HepG2 (cell line): ENCODE measurements at regions of chr2 and their contacts with region 1.

Region 1: GRCh38 chr2:207833251-207833751 is 63.6 kb upstream of the FZD5 start:
- DNase-seq: peak; percentile 87
- ATAC-seq: peak; percentile 33
- H3K4me3 ChIP-seq: no peak overlapping the region
- H3K27ac ChIP-seq: peak overlapping the region; percentile 16
- H3K4me1 ChIP-seq: peaks cover 80% of the 10 kb centered on the region
- H3K27me3 ChIP-seq: no peaks in the 10 kb centered on the region
- CTCF ChIP-seq: no peak
- EP300 ChIP-seq: no peak; a peak in 1 of 4 replicates
- POLR2A ChIP-seq: no peak
- RAD21 ChIP-seq: no peak

Region 2: DNA sequence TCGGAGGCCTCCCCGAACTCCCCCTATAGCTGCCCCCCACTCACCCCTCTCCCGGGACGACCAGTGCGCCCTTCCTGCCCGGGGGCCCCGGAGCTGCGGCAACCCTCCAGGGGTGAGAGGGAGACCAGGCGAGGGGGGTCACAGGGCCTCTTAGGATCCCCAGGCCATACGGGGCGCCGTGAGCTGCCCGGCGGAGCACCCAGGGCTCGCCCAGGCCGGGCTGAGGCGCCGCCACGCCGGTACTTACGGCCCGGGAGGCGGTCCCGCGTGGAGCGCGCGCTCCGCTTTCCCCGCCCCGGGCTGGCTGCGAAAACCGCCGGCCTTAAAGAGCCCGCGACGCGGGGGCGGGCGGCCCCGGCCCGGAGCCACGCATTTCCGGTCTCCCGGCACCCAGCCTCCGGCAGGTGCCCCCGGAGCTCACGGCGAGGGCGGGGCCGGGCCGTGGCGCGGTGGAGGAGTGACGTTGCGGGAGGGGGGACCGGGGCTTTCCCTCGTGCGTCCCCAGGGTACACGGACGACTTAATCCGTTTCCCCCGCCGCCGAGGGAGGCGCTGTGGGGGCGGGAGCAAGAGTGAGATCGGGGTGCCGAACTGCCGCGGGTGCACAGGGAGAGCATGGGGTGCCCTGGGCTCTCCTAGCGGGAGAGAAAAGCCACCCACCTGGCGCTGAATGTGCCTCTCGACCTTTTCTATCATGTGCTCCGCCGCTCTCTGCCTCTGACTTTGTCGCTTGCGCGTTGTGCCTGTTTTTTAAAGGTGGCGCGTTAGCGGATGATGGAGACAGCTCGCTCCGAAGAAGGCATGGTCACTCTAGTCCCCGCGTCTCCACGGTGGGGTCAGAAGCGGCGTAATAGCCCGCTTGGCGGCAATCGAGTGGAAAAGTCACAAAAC is 208.0 kb before region 1 on chr2 and contains the start of gene METTL21A:
- CTCF ChIA-PET with region 1: no interaction called
- POLR2A ChIA-PET with region 1: no interaction called
- in situ Hi-C with region 1: no loop called
- intact Hi-C with region 1: loop called (anchors 10 kb)
- DNase-seq: peak; percentile 94
- ATAC-seq: peak; percentile 80
- H3K4me3 ChIP-seq: peak within 1 kb of the TSS; percentile 80 to 92 (median 89)
- H3K27ac ChIP-seq: peak within 1 kb of the TSS; percentile 87
- H3K4me1 ChIP-seq: peaks cover 66% of the 10 kb centered on the region
- H3K27me3 ChIP-seq: no peaks in the 10 kb centered on the region; a peak in 1 of 5 replicates
- CTCF ChIP-seq: peak; percentile 92
- EP300 ChIP-seq: peak in 1 of 2 experiments; percentile 68; a peak in 3 of 4 replicates
- POLR2A ChIP-seq: peak; percentile 83 to 88
- RAD21 ChIP-seq: peak; percentile 69
- total RNA-seq, gene METTL21A: 61.2 and 65.1 TPM in 2 replicates

Region 3: DNA sequence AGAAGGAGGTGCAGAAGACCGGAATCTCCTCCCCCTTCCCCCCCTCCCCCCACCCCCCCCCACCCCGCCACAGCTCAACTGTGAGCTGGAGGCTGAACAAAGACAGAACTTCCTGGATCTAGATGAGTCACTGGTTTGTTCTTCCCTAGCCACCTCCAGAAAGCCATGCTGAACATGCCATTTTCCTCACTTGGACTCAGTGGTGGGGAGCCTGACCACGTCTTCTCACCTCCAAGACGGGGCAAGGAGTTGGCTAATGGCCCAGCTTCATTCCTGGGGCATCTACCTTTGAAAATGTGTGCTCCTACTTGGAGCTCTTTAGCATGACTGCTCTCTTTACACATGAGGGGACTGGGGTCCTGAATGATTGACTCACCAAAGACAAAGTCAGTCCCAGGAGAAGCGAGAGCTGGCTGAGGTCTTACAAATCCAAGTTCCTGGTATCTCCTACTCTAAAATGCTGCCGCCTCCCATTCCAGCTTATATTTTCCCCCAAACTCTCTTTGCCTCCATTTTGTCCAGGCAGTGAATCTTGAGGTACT is 41.0 kb before region 1 on chr2:
- CTCF ChIA-PET with region 1: no interaction called
- POLR2A ChIA-PET with region 1: interaction called, 23 read pairs
- in situ Hi-C with region 1: no loop called
- intact Hi-C with region 1: loop called (anchors 2 kb)
- DNase-seq: peak; percentile 84
- ATAC-seq: peak; percentile 66
- H3K4me3 ChIP-seq: peak overlapping the region in 1 of 3 experiments; percentile 49; a peak in 2 of 6 replicates
- H3K27ac ChIP-seq: peak overlapping the region; percentile 82
- H3K4me1 ChIP-seq: peaks cover 73% of the 10 kb centered on the region
- H3K27me3 ChIP-seq: no peaks in the 10 kb centered on the region
- CTCF ChIP-seq: no peak
- EP300 ChIP-seq: peak in 1 of 2 experiments; percentile 16; a peak in 1 of 4 replicates
- POLR2A ChIP-seq: 0 out of 4 replicates have a peak, but pooled peaks have one; percentile 44 to 53
- RAD21 ChIP-seq: no peak

Region 4: DNA sequence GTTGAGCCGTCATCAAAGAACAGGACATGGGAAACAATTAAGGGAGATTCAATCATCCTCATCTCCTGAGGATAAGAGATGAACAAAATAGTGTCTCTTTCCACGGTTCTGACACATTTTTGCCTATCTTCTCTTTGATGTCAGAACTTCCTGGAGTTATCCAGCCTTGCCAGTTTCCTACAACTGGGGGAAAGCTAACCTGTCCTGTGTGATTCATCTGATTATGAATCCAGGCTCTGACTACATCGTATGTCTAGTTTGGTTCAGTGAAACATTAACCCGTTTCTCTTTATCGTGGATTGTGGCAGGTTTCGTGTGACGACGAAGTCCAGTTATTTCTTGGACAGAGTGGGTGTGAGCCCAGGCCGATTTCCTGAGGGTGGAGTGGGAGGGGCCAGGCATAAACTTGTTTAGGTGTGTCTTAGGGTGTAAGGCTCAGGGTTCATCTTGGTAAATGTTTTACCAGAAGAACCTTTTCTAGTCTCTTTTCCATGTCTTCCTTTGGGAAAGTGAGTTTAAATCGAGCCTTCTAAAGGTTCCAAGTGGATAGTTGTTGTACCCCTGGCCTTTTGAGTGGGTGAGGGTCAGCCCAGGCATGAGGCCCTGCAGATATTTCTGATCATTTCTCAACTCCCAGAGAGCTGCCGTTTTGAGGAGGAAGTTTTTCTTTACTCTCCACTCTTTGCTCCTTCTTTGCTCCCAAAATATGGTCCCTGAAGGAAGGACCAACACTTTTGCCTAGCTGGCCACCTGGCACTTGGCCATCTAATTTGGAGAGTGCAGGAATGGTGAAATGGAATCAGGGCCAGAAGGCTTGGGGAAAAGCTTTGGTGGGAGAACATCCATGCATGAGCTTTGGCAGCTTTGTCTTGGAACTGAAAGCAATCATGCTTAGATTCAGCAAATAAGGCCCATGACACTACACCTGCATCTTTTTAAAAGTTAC is 13.2 kb before region 1 on chr2:
- CTCF ChIA-PET with region 1: no interaction called
- POLR2A ChIA-PET with region 1: interaction called, 108 read pairs
- in situ Hi-C with region 1: no loop called
- intact Hi-C with region 1: loop called (anchors 1 kb)
- DNase-seq: peak; percentile 97
- ATAC-seq: peak; percentile 89
- H3K4me3 ChIP-seq: peak overlapping the region; percentile 41 to 55 (median 53)
- H3K27ac ChIP-seq: peak overlapping the region; percentile 94
- H3K4me1 ChIP-seq: peaks cover 100% of the 10 kb centered on the region
- H3K27me3 ChIP-seq: no peaks in the 10 kb centered on the region
- CTCF ChIP-seq: no peak; the same call in 1 of the 2 replicates
- EP300 ChIP-seq: peak in 1 of 2 experiments; percentile 83; a peak in 3 of 4 replicates
- POLR2A ChIP-seq: peak; percentile 68 to 81
- RAD21 ChIP-seq: peak; percentile 40; the same call in 1 of the 2 replicates

Region 5: GRCh38 chr2:207926133-207926988 is 93.1 kb after region 1 on chr2:
- CTCF ChIA-PET with region 1: no interaction called
- POLR2A ChIA-PET with region 1: interaction called, 34 read pairs
- in situ Hi-C with region 1: no loop called
- intact Hi-C with region 1: no loop called
- DNase-seq: peak; percentile 96
- ATAC-seq: peak; percentile 97
- H3K4me3 ChIP-seq: peak overlapping the region in 2 of 3 experiments; percentile 5 to 18; a peak in 2 of 6 replicates
- H3K27ac ChIP-seq: peak overlapping the region; percentile 66
- H3K4me1 ChIP-seq: peaks cover 51% of the 10 kb centered on the region
- H3K27me3 ChIP-seq: no peaks in the 10 kb centered on the region
- CTCF ChIP-seq: no peak
- EP300 ChIP-seq: peak; percentile 53 to 79; a peak in 3 of 4 replicates
- POLR2A ChIP-seq: peak in 1 of 2 experiments; percentile 17; a peak in 1 of 4 replicates
- RAD21 ChIP-seq: no peak; the same call in 1 of the 2 replicates

Region 6: DNA sequence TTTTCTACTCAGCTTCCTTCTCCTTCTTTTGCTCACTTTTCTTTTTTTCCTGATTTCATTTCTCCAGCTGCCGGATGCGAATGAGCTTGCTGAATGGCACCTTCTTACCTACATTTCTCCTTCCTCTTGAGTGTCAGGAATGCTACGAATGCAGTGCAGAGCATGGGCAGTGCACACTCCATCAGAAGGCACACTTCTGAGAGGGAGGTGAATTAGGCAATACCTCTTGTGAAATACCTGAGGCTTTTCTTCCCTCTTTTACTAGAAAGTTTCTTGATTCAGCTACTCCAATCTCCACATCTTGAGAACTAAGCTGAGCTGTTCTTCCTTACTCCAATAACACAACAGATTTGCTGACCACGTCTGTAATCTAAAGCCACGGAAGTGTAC is 140.9 kb after region 1 on chr2:
- CTCF ChIA-PET with region 1: no interaction called
- POLR2A ChIA-PET with region 1: no interaction called
- in situ Hi-C with region 1: no loop called
- intact Hi-C with region 1: no loop called
- DNase-seq: no peak
- ATAC-seq: no peak
- H3K4me3 ChIP-seq: no peak overlapping the region
- H3K27ac ChIP-seq: no peak overlapping the region
- H3K4me1 ChIP-seq: peaks cover 28% of the 10 kb centered on the region
- H3K27me3 ChIP-seq: no peaks in the 10 kb centered on the region
- CTCF ChIP-seq: no peak
- EP300 ChIP-seq: no peak
- POLR2A ChIP-seq: no peak
- RAD21 ChIP-seq: no peak

Region 7: GRCh38 chr2:208033758-208034502 is 200.6 kb after region 1 on chr2:
- CTCF ChIA-PET with region 1: no interaction called
- POLR2A ChIA-PET with region 1: interaction called, 12 read pairs
- in situ Hi-C with region 1: no loop called
- intact Hi-C with region 1: loop called (anchors 5 kb)
- DNase-seq: peak; percentile 97
- ATAC-seq: peak; percentile 90
- H3K4me3 ChIP-seq: peak overlapping the region; percentile 4 to 16 (median 14); a peak in 2 of 6 replicates
- H3K27ac ChIP-seq: peak overlapping the region; percentile 70
- H3K4me1 ChIP-seq: peaks cover 70% of the 10 kb centered on the region
- H3K27me3 ChIP-seq: no peaks in the 10 kb centered on the region
- CTCF ChIP-seq: peak; percentile 98
- EP300 ChIP-seq: peak; percentile 53 to 55; a peak in 3 of 4 replicates
- POLR2A ChIP-seq: no peak
- RAD21 ChIP-seq: peak; percentile 91